ENCODE measurements at regions of chr15 and their contacts with region 1.

Region 1: GRCh38 chr15:73633111-73633990 is at the start of gene NPTN:
- DNase-seq: peak; percentile 97 to 99
- H3K4me3 ChIP-seq: peak within 1 kb of the TSS; percentile 98
- H3K4me3 Mint-ChIP-seq: peak within 1 kb of the TSS; percentile 79
- H3K27ac Mint-ChIP-seq: peak within 1 kb of the TSS; percentile 98
- H3K4me1 ChIP-seq: peaks cover 25% of the 10 kb centered on the region
- H3K4me1 Mint-ChIP-seq: peaks cover 24% of the 10 kb centered on the region
- H3K27me3 ChIP-seq: no peaks in the 10 kb centered on the region
- H3K27me3 Mint-ChIP-seq: peaks cover under 1% of the 10 kb centered on the region
- CTCF ChIP-seq: peak in 1 of 2 experiments; percentile 15
- total RNA-seq, gene NPTN: 124 TPM in 2 replicates

Region 2: GRCh38 chr15:73318463-73319351 is 314.6 kb before region 1 on chr15:
- CTCF ChIA-PET with region 1: no interaction called
- POLR2A ChIA-PET with region 1: no interaction called
- intact Hi-C with region 1: no loop called
- DNase-seq: no peak
- H3K4me3 ChIP-seq: no peak overlapping the region
- H3K4me3 Mint-ChIP-seq: no peak overlapping the region
- H3K27ac Mint-ChIP-seq: no peak overlapping the region
- H3K4me1 ChIP-seq: no peaks in the 10 kb centered on the region
- H3K4me1 Mint-ChIP-seq: no peaks in the 10 kb centered on the region
- H3K27me3 ChIP-seq: no peaks in the 10 kb centered on the region
- H3K27me3 Mint-ChIP-seq: peaks cover 24% of the 10 kb centered on the region
- CTCF ChIP-seq: no peak

Region 3: DNA sequence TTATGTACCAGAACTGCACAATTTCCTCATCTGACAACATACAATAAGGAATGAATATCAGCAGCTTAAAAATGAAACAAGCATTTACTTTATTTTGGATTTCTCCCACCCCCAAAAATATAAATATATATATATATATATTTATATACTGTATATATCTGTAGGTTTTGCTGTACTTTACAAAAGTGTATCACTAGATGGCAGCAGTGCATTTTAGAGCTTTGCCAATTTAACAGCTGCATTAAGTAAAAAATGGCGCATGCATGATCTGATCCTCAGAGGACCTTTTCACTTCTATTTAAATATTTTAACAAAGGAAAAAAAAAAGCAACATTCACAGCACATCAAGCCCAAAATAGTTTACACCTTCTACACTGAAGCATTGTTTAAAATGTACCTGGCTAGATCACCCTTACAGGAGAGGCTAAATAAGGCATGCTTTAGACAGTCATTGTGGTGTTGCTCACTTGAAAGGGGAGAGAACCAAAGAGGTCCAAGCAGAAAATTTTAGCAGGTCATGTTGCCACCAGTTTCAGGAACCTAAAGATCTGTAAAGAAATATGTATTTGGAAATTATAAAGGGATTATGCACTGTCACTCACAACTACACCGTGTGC is 72.7 kb before region 1 on chr15:
- CTCF ChIA-PET with region 1: interaction called, 48 read pairs
- POLR2A ChIA-PET with region 1: interaction called, 4 read pairs
- intact Hi-C with region 1: loop called (anchors 1 kb)
- DNase-seq: peak in 1 of 2 experiments; percentile 42
- H3K4me3 ChIP-seq: no peak overlapping the region
- H3K4me3 Mint-ChIP-seq: no peak overlapping the region
- H3K27ac Mint-ChIP-seq: no peak overlapping the region
- H3K4me1 ChIP-seq: no peaks in the 10 kb centered on the region
- H3K4me1 Mint-ChIP-seq: no peaks in the 10 kb centered on the region
- H3K27me3 ChIP-seq: no peaks in the 10 kb centered on the region
- H3K27me3 Mint-ChIP-seq: no peaks in the 10 kb centered on the region
- CTCF ChIP-seq: peak; percentile 45 to 50

Region 4: DNA sequence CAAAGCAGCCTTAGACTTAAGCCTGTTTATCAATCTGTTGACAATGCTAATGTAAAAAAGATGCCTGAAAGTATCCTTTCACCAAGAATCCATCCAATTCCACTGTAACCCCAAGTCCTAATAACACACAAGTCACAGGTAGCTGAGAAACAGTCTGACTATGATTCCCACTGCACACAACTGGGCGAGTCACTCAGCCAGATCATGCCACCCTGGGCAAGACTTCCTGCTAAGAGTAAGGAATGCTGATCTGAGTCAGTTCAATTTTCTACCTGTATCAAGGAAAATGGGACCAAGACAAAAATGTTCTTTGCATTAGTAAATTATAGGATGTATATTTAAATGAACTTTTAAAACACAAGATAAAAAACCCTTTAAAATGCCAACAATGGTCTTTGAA is 33.4 kb before region 1 on chr15:
- CTCF ChIA-PET with region 1: interaction called, 6 read pairs
- POLR2A ChIA-PET with region 1: interaction called, 3 read pairs
- intact Hi-C with region 1: loop called (anchors 5 kb)
- DNase-seq: no peak
- H3K4me3 ChIP-seq: no peak overlapping the region
- H3K4me3 Mint-ChIP-seq: no peak overlapping the region
- H3K27ac Mint-ChIP-seq: no peak overlapping the region
- H3K4me1 ChIP-seq: peaks cover 22% of the 10 kb centered on the region
- H3K4me1 Mint-ChIP-seq: peaks cover 12% of the 10 kb centered on the region
- H3K27me3 ChIP-seq: no peaks in the 10 kb centered on the region
- H3K27me3 Mint-ChIP-seq: no peaks in the 10 kb centered on the region
- CTCF ChIP-seq: no peak

Region 5: DNA sequence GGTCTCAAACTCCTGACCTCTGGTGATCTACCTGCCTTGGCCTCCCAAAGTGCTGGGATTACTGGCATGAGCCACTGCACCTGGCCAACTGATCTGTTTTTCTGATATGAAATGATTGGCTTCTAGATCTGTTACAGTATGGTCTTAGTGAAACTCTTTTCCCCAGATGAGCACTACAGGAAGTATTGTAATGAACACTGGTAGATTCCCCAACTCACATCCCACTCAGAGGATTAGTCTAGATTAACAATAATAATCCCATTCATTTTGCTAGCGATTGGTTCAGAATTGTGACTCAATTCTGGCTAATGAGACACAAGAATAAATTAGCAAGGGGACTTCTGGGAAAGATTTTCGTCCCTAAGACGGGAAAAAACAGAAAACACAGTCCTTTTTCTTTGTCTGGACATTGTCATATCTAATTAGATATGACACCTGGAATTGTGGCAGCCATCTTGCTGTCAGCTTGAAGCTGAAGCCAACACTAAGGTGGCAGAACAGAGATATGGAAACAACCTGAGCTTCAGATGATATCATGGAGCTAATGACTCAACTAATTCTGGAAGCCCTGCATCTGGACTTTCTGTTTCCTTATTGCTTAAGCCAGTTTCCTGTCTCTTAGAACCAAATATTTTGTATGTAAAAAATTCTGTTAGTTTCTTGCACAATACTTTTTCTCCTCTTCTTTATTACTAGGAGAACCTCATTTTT is 17.2 kb after region 1 on chr15:
- CTCF ChIA-PET with region 1: interaction called, 10 read pairs
- POLR2A ChIA-PET with region 1: no interaction called
- intact Hi-C with region 1: no loop called
- DNase-seq: no peak
- H3K4me3 ChIP-seq: no peak overlapping the region
- H3K4me3 Mint-ChIP-seq: no peak overlapping the region
- H3K27ac Mint-ChIP-seq: no peak overlapping the region
- H3K4me1 ChIP-seq: peaks cover 7% of the 10 kb centered on the region; the same call in 1 of the 2 replicates
- H3K4me1 Mint-ChIP-seq: peaks cover 23% of the 10 kb centered on the region
- H3K27me3 ChIP-seq: no peaks in the 10 kb centered on the region
- H3K27me3 Mint-ChIP-seq: peaks cover 3% of the 10 kb centered on the region
- CTCF ChIP-seq: no peak

Region 6: GRCh38 chr15:73683777-73684580 is 50.6 kb after region 1 on chr15 and contains the start of gene CD276:
- CTCF ChIA-PET with region 1: interaction called, 8 read pairs
- POLR2A ChIA-PET with region 1: no interaction called
- intact Hi-C with region 1: loop called (anchors 2 kb)
- DNase-seq: peak; percentile 79 to 84
- H3K4me3 ChIP-seq: peak within 1 kb of the TSS; percentile 88
- H3K4me3 Mint-ChIP-seq: peak within 1 kb of the TSS; percentile 84
- H3K27ac Mint-ChIP-seq: peak within 1 kb of the TSS; percentile 71
- H3K4me1 ChIP-seq: peaks cover 13% of the 10 kb centered on the region
- H3K4me1 Mint-ChIP-seq: peaks cover 24% of the 10 kb centered on the region
- H3K27me3 ChIP-seq: no peaks in the 10 kb centered on the region
- H3K27me3 Mint-ChIP-seq: no peaks in the 10 kb centered on the region
- CTCF ChIP-seq: peak in 1 of 2 experiments; percentile 79
- total RNA-seq, gene CD276: 70.5 and 74.2 TPM in 2 replicates

Region 7: GRCh38 chr15:73697033-73697467 is 63.7 kb after region 1 on chr15:
- CTCF ChIA-PET with region 1: interaction called, 33 read pairs
- POLR2A ChIA-PET with region 1: interaction called, 3 read pairs
- intact Hi-C with region 1: loop called (anchors 1 kb)
- DNase-seq: no peak
- H3K4me3 ChIP-seq: no peak overlapping the region
- H3K4me3 Mint-ChIP-seq: no peak overlapping the region
- H3K27ac Mint-ChIP-seq: no peak overlapping the region
- H3K4me1 ChIP-seq: no peaks in the 10 kb centered on the region
- H3K4me1 Mint-ChIP-seq: peaks cover 12% of the 10 kb centered on the region
- H3K27me3 ChIP-seq: no peaks in the 10 kb centered on the region
- H3K27me3 Mint-ChIP-seq: no peaks in the 10 kb centered on the region
- CTCF ChIP-seq: no peak

Region 8: DNA sequence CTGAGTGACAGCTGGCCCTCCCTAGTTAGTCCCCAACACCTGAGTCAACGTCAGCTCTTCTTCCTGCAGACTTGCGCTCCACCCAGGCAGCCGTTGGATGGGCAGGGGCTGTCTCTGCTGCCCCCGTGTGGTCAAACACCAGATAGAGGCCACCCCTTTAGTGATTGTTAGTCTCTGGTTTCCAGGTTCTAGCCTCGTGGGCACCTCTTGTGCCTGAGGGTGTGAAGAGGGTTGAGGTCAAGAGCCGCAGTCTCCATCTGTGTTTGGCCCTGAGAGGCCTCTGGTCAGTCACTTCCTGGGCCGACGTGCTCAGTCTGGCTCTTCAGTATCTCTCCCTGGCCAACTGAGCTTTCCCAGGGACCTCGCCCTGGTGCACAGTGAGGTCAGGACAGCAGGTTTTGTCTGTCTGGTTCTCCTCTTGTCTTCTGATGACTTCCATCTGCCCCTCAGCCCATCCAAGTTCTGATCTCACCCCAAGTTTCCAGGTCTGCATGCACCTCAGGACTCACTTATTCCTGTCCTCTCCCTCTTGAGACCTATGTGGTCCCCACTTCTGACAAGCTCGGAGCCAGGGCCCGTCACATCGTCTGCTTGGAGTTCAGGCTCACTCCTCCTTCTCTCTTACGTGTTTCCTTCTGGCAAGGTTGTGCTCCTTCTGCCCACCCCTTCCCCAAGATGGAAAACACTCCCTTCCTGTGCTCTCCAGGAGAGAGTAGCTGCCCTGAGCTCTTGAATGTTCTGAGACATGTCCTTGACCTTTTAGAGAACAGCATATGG is 71.7 kb after region 1 on chr15:
- CTCF ChIA-PET with region 1: interaction called, 33 read pairs
- POLR2A ChIA-PET with region 1: interaction called, 12 read pairs
- intact Hi-C with region 1: loop called (anchors 1 kb)
- DNase-seq: peak; percentile 74 to 75
- H3K4me3 ChIP-seq: no peak overlapping the region
- H3K4me3 Mint-ChIP-seq: no peak overlapping the region
- H3K27ac Mint-ChIP-seq: no peak overlapping the region
- H3K4me1 ChIP-seq: no peaks in the 10 kb centered on the region
- H3K4me1 Mint-ChIP-seq: no peaks in the 10 kb centered on the region
- H3K27me3 ChIP-seq: no peaks in the 10 kb centered on the region
- H3K27me3 Mint-ChIP-seq: no peaks in the 10 kb centered on the region
- CTCF ChIP-seq: peak; percentile 76 to 88

Region 9: GRCh38 chr15:74011610-74012009 is 378.3 kb after region 1 on chr15:
- CTCF ChIA-PET with region 1: no interaction called
- POLR2A ChIA-PET with region 1: no interaction called
- intact Hi-C with region 1: no loop called
- DNase-seq: no peak
- H3K4me3 ChIP-seq: no peak overlapping the region
- H3K4me3 Mint-ChIP-seq: no peak overlapping the region
- H3K27ac Mint-ChIP-seq: no peak overlapping the region
- H3K4me1 ChIP-seq: no peaks in the 10 kb centered on the region
- H3K4me1 Mint-ChIP-seq: peaks cover 11% of the 10 kb centered on the region
- H3K27me3 ChIP-seq: no peaks in the 10 kb centered on the region
- H3K27me3 Mint-ChIP-seq: no peaks in the 10 kb centered on the region
- CTCF ChIP-seq: no peak